ENCODE measurements at regions of chr15 and their contacts with region 1.

Region 1: GRCh38 chr15:99275525-99276128 is 24.3 kb downstream of the LRRC28 start:
- DNase-seq: no peak
- ATAC-seq: no peak
- H3K4me3 ChIP-seq: no peak overlapping the region
- H3K4me3 Mint-ChIP-seq: no peak overlapping the region
- H3K27ac ChIP-seq: no peak overlapping the region
- H3K27ac Mint-ChIP-seq: peak overlapping the region in 1 of 9 donors; percentile 59
- H3K4me1 ChIP-seq: no peaks in the 10 kb centered on the region
- H3K4me1 Mint-ChIP-seq: peaks cover 7 to 35% (median 19%) of the 10 kb centered on the region in 7 donors
- H3K27me3 ChIP-seq: no peaks in the 10 kb centered on the region
- H3K27me3 Mint-ChIP-seq: no peaks in the 10 kb centered on the region

Region 2: GRCh38 chr15:99250494-99251435 is 24.9 kb before region 1 on chr15:
- CTCF ChIA-PET with region 1: interaction called, 5 read pairs
- POLR2A ChIA-PET with region 1: no interaction called
- intact Hi-C with region 1: loop called in 1 of 2 experiments (anchors 1 kb)
- DNase-seq: peak; percentile 78 to 95 (median 92)
- ATAC-seq: peak; percentile 96
- H3K4me3 ChIP-seq: peak overlapping the region; percentile 76
- H3K4me3 Mint-ChIP-seq: peak overlapping the region in 8 of 10 donors; percentile 81 to 95 (median 92)
- H3K27ac ChIP-seq: peak overlapping the region; percentile 65
- H3K27ac Mint-ChIP-seq: peak overlapping the region; percentile 83 to 92 (median 90)
- H3K4me1 ChIP-seq: peaks cover 14 to 28% of the 10 kb centered on the region in 2 donors
- H3K4me1 Mint-ChIP-seq: peaks cover 24 to 32% (median 27%) of the 10 kb centered on the region in 7 donors
- H3K27me3 ChIP-seq: no peaks in the 10 kb centered on the region
- H3K27me3 Mint-ChIP-seq: no peaks in the 10 kb centered on the region

Region 3: DNA sequence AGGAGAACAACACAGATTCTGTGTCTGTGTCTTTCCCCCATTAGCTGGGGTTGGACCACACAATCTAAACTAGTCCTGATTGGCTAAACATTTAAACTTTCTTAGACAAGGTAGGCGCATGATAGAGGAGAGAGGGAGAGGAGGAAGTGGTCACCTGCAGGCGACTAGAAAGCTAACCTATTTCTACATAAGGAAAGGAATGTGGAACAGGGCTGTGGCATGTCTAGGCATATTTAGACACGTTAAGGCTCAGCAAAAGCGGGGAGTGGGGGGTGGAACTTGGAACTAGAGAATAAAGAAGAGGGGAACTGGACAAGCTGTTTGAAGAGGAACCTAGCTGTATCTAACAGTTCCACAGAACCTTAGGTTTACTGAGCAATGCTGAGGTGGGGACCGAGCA is 11.5 kb before region 1 on chr15:
- CTCF ChIA-PET with region 1: interaction called, 16 read pairs
- POLR2A ChIA-PET with region 1: interaction called, 3 read pairs
- intact Hi-C with region 1: no loop called
- DNase-seq: no peak
- ATAC-seq: no peak
- H3K4me3 ChIP-seq: no peak overlapping the region
- H3K4me3 Mint-ChIP-seq: no peak overlapping the region
- H3K27ac ChIP-seq: no peak overlapping the region
- H3K27ac Mint-ChIP-seq: no peak overlapping the region
- H3K4me1 ChIP-seq: no peaks in the 10 kb centered on the region
- H3K4me1 Mint-ChIP-seq: peaks cover 0 to 16% (median 0%) of the 10 kb centered on the region in 7 donors
- H3K27me3 ChIP-seq: no peaks in the 10 kb centered on the region
- H3K27me3 Mint-ChIP-seq: peaks cover 0 to 5% (median 0%) of the 10 kb centered on the region in 5 donors

Region 4: DNA sequence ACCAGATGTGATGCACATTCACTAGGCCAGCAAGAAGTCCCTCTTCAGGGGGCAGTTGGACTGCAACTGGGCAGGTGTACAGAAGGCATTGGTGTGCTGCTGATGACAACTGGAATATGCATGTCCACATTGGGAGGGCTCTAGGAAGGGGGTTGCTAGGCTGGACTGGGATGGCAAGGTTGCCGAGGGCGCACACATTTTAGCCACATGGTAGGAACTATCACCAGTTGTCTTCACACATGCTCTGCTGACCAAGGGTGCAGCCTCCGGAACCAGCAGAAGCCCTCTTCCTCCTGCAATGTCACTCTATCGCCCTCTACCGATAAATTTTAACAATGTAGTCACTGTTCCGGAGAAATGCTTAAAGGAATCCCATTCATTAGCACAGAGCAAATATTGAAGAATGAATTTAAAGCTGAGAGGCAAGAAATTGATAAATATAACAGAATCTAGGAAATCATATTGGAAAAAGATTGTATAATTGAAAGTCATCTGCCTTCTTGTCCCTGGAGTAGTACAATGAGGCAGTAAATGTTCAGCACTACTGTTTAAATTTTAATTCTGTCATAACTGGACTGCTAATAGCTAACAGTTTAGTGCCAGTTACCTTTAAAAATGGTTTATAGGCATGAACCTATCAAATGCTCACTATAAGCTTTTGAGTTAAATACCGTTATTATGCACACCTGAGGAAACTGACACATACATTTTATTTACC is 480.2 kb after region 1 on chr15:
- CTCF ChIA-PET with region 1: interaction called, 49 read pairs
- POLR2A ChIA-PET with region 1: no interaction called
- intact Hi-C with region 1: loop called (anchors 1 kb)
- DNase-seq: peak in 8 of 9 donors; percentile 29 to 72 (median 62)
- ATAC-seq: peak; percentile 86
- H3K4me3 ChIP-seq: no peak overlapping the region
- H3K4me3 Mint-ChIP-seq: no peak overlapping the region
- H3K27ac ChIP-seq: no peak overlapping the region
- H3K27ac Mint-ChIP-seq: peak overlapping the region in 1 of 9 donors; percentile 10
- H3K4me1 ChIP-seq: no peaks in the 10 kb centered on the region
- H3K4me1 Mint-ChIP-seq: peaks cover 0 to 4% (median 0%) of the 10 kb centered on the region in 7 donors
- H3K27me3 ChIP-seq: no peaks in the 10 kb centered on the region
- H3K27me3 Mint-ChIP-seq: peaks cover 0 to 5% (median 0%) of the 10 kb centered on the region in 5 donors

Region 5: DNA sequence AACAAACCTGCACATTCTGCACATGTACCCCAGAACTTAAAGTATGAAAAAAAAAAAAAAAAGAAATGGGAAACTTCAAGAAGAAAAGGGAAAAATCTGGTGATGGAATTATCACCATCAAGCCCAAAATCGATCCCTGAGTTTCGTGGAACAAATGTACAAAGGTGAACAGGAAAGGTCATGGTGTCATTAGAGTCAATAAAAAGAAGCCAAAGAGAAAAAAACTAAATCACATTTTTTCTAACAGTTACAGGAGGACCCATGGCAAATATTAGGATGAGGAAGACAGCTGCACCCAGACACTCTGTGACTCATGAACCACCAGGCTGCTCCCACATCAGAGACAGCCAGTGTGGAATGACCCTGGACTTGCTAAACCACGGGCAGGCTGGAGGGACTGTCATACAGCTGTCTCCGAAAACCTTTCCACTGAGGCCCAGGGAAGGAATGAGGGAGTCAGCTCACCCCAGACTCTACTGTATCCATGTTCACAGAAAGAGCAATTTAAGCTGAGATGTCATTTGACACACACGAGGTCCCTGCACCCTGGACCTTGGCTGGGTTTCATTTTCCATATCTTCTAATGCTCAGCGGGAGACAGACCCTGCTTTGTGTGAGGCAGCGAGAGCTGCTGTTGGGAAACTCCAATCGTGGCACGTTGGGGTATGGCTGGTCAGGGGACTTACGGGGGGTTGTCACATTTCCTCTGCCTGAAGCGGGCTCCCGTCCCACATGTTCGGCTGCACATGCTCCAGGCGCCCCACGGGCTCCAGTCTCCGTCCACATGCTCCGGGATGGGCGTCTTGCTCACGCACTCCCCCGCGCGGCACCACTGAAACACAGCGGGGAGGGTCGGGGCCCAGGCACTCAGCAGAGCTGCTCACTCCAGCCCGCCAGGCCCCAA is 855.9 kb after region 1 on chr15:
- CTCF ChIA-PET with region 1: no interaction called
- POLR2A ChIA-PET with region 1: no interaction called
- intact Hi-C with region 1: loop called in 1 of 2 experiments (anchors 5 kb)
- DNase-seq: peak in 4 of 9 donors; percentile 7 to 38 (median 18)
- ATAC-seq: peak; percentile 53
- H3K4me3 ChIP-seq: no peak overlapping the region
- H3K4me3 Mint-ChIP-seq: peak overlapping the region in 7 of 10 donors; percentile 33 to 73 (median 56)
- H3K27ac ChIP-seq: no peak overlapping the region
- H3K27ac Mint-ChIP-seq: no peak overlapping the region
- H3K4me1 ChIP-seq: no peaks in the 10 kb centered on the region
- H3K4me1 Mint-ChIP-seq: no peaks in the 10 kb centered on the region
- H3K27me3 ChIP-seq: no peaks in the 10 kb centered on the region
- H3K27me3 Mint-ChIP-seq: no peaks in the 10 kb centered on the region

Region 6: GRCh38 chr15:100873029-100873677 is 1597.5 kb after region 1 on chr15:
- CTCF ChIA-PET with region 1: no interaction called
- POLR2A ChIA-PET with region 1: no interaction called
- intact Hi-C with region 1: loop called in 1 of 2 experiments (anchors 5 kb)
- DNase-seq: peak in 8 of 9 donors; percentile 10 to 59 (median 48)
- ATAC-seq: peak; percentile 83
- H3K4me3 ChIP-seq: no peak overlapping the region
- H3K4me3 Mint-ChIP-seq: no peak overlapping the region
- H3K27ac ChIP-seq: no peak overlapping the region
- H3K27ac Mint-ChIP-seq: no peak overlapping the region
- H3K4me1 ChIP-seq: no peaks in the 10 kb centered on the region
- H3K4me1 Mint-ChIP-seq: no peaks in the 10 kb centered on the region
- H3K27me3 ChIP-seq: peaks cover 0 to under 1% of the 10 kb centered on the region in 2 donors
- H3K27me3 Mint-ChIP-seq: peaks cover 14 to 43% (median 27%) of the 10 kb centered on the region in 5 donors

Region 7: GRCh38 chr15:101008158-101009139 is 1732.8 kb after region 1 on chr15:
- CTCF ChIA-PET with region 1: no interaction called
- POLR2A ChIA-PET with region 1: no interaction called
- intact Hi-C with region 1: loop called in 1 of 2 experiments (anchors 5 kb)
- DNase-seq: peak; percentile 67 to 92 (median 85)
- ATAC-seq: peak; percentile 97
- H3K4me3 ChIP-seq: peak overlapping the region; percentile 77
- H3K4me3 Mint-ChIP-seq: peak overlapping the region; percentile 84 to 96 (median 90)
- H3K27ac ChIP-seq: no peak overlapping the region
- H3K27ac Mint-ChIP-seq: peak overlapping the region in 3 of 9 donors; percentile 63 to 75 (median 68)
- H3K4me1 ChIP-seq: peaks cover 8 to 9% of the 10 kb centered on the region in 2 donors
- H3K4me1 Mint-ChIP-seq: peaks cover 9 to 25% (median 23%) of the 10 kb centered on the region in 7 donors
- H3K27me3 ChIP-seq: no peaks in the 10 kb centered on the region
- H3K27me3 Mint-ChIP-seq: peaks cover 0 to 29% (median 0%) of the 10 kb centered on the region in 5 donors